Left cardiac atrium (tissue), 4 donors: ENCODE measurements at regions of chr5 and their contacts with region 1.

Region 1: DNA sequence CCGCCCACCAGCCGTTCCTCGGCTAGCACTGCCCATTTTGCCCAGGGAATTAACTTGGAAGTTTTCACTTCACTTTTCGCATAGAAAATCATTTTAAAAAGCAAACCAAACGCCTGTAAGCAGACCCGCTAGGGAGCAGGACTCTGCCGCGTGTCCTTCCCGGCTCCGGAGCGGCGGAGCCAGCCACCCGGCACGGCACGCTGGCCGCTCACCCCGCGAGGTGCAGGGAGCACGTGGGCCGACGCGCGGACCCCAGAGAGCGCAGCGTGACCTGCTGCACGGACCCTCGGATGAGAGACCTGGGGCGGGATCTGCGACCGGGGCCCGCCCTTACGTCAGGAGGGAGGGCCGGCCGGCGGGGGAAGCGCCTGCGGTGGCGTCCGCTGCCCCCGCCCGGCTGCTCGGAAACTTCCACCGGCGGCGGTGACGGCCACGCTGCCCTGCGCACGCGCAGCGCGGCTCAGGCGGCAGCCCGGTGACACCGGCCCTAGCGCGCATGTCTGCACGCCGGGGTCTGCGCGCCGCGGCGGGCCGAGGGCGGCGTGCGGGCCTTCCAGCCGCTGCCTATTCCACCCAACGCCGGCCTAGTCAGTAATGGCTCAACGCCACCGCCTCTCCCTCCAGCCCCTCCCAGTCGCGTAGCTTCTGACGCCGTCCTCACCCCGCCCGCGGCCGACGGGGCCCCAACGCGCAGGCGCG is 506 bp upstream of the TENT4A start:
- DNase-seq: peak; percentile 96
- ATAC-seq: peak; percentile 92 to 93

Region 2: DNA sequence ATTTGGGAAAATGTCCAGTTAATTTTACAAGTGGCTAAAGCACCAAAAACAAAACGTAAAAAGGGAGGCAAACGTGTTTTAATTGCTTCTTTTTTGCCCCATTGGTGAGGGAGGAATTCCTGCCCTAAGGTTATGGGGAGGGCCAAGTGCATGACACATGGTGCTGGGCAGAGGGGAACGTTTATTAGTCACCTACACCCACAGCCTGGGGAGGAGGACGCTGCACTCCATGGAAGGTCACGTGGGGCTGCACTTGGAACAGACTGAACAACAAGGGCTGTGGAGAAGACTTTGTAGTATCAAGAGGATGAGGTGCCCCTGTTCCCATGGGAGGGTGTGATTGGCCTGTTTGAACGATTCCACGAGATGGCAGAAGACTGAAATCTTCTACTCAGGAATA is 1586.3 kb before region 1 on chr5:
- intact Hi-C with region 1: no loop called
- DNase-seq: no peak
- ATAC-seq: peak in 1 of 2 donors; percentile 38

Region 3: GRCh38 chr5:6448622-6449464 is 263.9 kb before region 1 on chr5 and contains the start of gene UBE2QL1:
- intact Hi-C with region 1: no loop called
- DNase-seq: peak; percentile 36
- ATAC-seq: peak; percentile 51 to 64
- total RNA-seq, gene UBE2QL1: 5.6 to 7.8 TPM

Region 4: DNA sequence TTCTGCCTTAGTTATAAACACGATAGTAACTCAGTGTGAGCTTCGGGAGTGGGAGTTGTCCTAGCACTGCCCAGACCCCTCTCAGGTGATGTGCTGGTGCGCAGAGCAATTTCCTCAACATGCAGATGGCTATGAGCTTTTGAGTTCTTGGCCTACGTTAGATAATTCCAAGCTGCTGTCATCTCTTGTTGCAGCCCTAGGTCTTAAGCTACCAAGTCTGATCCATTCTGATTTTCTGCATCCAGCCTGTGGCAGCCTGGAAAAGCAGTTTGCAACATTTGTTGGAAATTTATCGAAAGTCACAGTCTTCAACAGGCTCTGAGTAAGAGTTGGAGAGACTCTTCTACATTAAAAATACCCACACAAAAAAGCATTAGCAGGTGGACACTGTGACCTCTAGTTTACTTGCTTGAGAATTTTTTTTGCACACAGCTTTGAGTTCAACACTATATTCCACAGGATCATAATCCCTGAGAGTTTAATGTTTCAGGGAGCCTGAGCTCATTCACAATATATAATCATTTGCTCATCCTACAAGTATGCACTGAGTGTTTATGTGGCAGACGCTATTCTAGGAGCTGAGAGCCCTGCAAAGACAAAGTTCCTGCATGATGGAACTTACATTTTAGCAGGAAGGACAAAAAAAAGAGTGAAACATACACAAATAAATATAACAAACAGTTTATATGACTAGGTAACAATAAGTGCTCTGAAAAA is 172.5 kb before region 1 on chr5:
- intact Hi-C with region 1: no loop called
- DNase-seq: no peak
- ATAC-seq: peak in 1 of 2 donors; percentile 75

Region 5: GRCh38 chr5:6598351-6598900 is 114.3 kb before region 1 on chr5:
- intact Hi-C with region 1: no loop called
- DNase-seq: peak; percentile 46
- ATAC-seq: peak; percentile 76

Region 6: DNA sequence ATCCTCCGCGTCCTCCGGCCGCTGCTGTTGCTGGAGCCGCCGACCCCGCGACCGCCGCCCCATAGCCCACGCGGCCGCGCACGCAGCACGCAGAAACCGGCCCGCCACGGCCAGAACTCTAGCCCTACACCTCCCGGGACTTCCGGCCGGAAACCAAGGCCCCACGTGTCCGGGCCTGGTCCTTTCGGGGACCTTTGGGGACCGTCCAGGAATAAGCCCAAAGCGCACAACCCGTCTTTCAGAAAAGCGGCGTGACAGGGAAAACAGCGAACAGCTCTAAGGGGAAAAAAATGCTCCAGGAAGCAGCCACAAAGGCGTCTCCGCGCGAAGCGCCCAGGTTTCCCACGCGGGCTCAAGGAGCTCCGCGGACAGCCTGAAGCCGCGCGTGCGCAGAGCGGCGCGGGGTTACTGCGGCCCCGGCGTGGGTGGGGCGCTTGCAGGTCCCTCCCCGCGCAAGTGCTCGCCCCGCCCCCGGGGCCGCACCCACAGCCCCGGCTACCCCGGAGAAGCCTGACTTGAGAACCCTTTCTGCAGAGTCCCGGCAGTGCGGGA is 79.7 kb before region 1 on chr5 and contains the starts of genes NSUN2 and SRD5A1:
- intact Hi-C with region 1: loop called in 1 of 2 experiments (anchors 5 kb)
- DNase-seq: peak; percentile 91
- ATAC-seq: peak; percentile 98 to 99
- total RNA-seq, gene NSUN2: 23.2 to 29.3 TPM
- total RNA-seq, gene SRD5A1: 2.0 to 2.2 TPM